GM13976 (cell line): ENCODE measurements at regions of chr16 and their contacts with region 1.

Region 1: GRCh38 chr16:14501331-14502255 is 128.5 kb downstream of the PARN start:
- DNase-seq: no peak
- CTCF ChIP-seq: no peak

Region 2: GRCh38 chr16:14405611-14406537 is 95.7 kb before region 1 on chr16:
- in situ Hi-C with region 1: loop called (anchors 25 kb)
- DNase-seq: peak; percentile 82
- CTCF ChIP-seq: no peak